ENCODE measurements at regions of chr5 and their contacts with region 1.

Region 1: DNA sequence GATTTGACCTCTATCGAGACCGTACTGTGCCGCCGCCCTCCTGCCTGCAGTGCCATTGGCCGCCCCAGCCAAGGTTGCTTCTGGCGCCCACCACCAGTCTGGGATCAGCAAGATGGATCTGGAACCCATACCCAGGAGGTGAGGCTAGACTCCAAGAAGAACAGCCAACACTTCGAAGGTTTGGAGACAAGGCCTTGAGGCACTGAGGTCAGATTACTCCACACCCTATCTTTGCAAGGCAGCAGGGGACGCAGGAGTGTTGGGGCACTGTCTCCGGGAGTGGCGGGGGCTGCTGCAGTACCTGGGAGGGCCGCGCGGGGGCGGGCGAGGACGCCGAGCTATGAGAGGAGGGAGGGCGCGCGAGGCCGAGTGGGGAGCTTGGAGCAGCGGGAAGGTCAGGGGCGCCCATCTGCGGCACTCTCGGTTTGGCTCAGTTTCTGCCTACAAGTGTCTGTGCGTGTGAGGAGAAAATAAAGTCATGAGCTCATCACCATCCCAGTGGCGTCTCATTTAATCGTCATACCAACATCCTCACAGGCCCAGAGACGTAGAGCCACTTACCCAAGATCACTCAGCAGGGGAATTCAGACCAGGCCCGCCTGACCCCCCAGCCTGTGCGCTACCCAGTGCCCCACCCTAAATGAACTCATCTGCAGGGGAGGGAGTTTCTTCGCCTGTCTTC is 20.5 kb upstream of the PSD2 start:
- DNase-seq: peak; percentile 84
- ATAC-seq: peak; percentile 98
- H3K4me3 ChIP-seq: peak overlapping the region in 3 of 5 experiments; percentile 1 to 26 (median 6)
- H3K4me3 Mint-ChIP-seq: peak overlapping the region; percentile 64
- H3K27ac ChIP-seq: no peak overlapping the region
- H3K27ac Mint-ChIP-seq: peak overlapping the region; percentile 41
- H3K4me1 ChIP-seq: peaks cover 7 to 13% of the 10 kb centered on the region in 2 donors
- H3K4me1 Mint-ChIP-seq: peaks cover 15% of the 10 kb centered on the region
- H3K27me3 ChIP-seq: peaks cover 0 to 5% (median 0%) of the 10 kb centered on the region in 4 experiments
- H3K27me3 Mint-ChIP-seq: peaks cover 14% of the 10 kb centered on the region
- CTCF ChIP-seq: peak; percentile 94

Region 2: GRCh38 chr5:139863855-139864558 is 88.9 kb after region 1 on chr5:
- CTCF ChIA-PET with region 1: interaction called, 27 read pairs
- POLR2A ChIA-PET with region 1: no interaction called
- intact Hi-C with region 1: no loop called
- DNase-seq: peak; percentile 73
- ATAC-seq: peak; percentile 85
- H3K4me3 ChIP-seq: no peak overlapping the region
- H3K4me3 Mint-ChIP-seq: no peak overlapping the region
- H3K27ac ChIP-seq: no peak overlapping the region
- H3K27ac Mint-ChIP-seq: no peak overlapping the region
- H3K4me1 ChIP-seq: peaks cover 0 to 3% of the 10 kb centered on the region in 2 donors
- H3K4me1 Mint-ChIP-seq: peaks cover 7% of the 10 kb centered on the region
- H3K27me3 ChIP-seq: peaks cover 0 to 6% (median 1%) of the 10 kb centered on the region in 4 experiments
- H3K27me3 Mint-ChIP-seq: peaks cover 23% of the 10 kb centered on the region
- CTCF ChIP-seq: peak; percentile 92

Region 3: DNA sequence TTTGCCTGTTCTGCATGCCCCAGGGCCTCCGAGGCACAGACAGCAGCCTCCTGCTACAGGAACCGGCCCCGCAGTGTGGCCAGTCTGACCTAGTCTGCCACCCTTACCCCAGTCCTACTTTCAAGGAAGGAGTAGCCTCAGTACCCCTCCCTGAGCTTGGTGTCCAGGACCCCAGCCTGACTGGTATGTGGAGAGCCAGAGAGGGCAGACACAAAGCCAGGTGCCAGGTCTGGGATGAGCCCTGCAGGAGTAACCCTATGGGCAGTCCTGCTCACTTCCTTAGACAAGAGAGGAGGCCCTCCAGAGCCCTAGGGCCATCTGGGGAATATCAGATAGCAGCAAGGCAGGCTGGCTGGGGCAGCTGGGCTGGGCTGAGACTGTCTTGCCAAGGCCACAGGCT is 200.2 kb after region 1 on chr5:
- CTCF ChIA-PET with region 1: no interaction called
- POLR2A ChIA-PET with region 1: no interaction called
- intact Hi-C with region 1: no loop called
- DNase-seq: no peak
- ATAC-seq: no peak
- H3K4me3 ChIP-seq: no peak overlapping the region
- H3K4me3 Mint-ChIP-seq: no peak overlapping the region
- H3K27ac ChIP-seq: no peak overlapping the region
- H3K27ac Mint-ChIP-seq: no peak overlapping the region
- H3K4me1 ChIP-seq: no peaks in the 10 kb centered on the region
- H3K4me1 Mint-ChIP-seq: no peaks in the 10 kb centered on the region
- H3K27me3 ChIP-seq: peaks cover 0 to 10% (median 8%) of the 10 kb centered on the region in 4 experiments
- H3K27me3 Mint-ChIP-seq: peaks cover 55% of the 10 kb centered on the region
- CTCF ChIP-seq: no peak